ENCODE measurements at regions of chr9 and their contacts with region 1.

Region 1: DNA sequence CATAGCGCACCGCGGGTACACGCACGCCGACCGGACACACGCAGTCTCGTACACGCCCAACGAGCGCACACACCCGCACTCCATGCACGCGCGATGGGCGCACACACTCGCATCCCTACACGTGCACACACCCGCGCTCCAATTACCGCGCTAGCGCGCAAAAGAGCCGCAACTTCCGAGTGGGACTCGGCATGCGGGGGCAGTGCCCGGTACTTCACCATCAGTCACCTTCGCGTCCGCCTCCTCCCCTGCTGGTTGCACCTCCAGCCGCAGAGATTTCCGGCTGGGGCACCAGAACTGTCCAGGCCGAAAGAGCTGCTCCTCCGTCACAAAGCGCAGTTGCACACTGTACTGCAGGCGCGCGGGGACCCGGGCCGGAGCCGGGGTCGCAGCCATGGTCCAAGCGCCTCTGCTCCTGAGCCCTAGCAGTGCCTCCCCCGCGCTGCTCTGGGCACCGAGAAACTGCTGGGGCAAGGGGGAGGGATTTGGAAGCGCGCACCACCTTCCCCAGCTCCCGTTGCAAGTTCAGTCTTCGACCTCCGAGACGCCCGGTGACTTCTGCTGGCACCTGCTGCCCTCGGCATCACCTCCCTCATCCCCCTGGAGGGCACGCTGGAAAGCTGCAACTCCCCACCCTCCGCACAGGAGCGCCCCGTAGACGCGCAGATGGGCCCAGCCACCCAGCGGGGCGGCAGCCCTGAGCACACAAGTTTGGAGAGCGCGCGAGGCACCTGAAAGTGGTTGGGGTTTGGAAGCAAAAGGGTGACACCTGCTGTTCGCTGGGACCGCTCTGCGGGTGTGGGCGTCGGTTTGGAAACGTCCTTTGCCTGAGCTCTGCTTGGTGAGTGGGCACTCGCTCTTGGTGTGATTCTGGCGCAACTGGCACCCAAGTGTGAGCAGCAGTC is 337.4 kb upstream of the PUM3 start:
- DNase-seq: peak; percentile 39
- H3K4me3 ChIP-seq: peak overlapping the region in 1 of 2 experiments; percentile 19; a peak in 2 of 4 replicates
- H3K27ac ChIP-seq: no peak overlapping the region
- H3K4me1 ChIP-seq: no peaks in the 10 kb centered on the region
- H3K27me3 ChIP-seq: peaks cover 27% of the 10 kb centered on the region; the same call in 1 of the 2 replicates
- CTCF ChIP-seq: 0 out of 2 replicates have a peak, but pooled peaks have one; percentile 27
- EP300 ChIP-seq: no peak
- RAD21 ChIP-seq: peak; percentile 44

Region 2: GRCh38 chr9:3191715-3192114 is 10.4 kb after region 1 on chr9:
- CTCF ChIA-PET with region 1: interaction called, 10 read pairs
- POLR2A ChIA-PET with region 1: no interaction called
- DNase-seq: no peak
- H3K4me3 ChIP-seq: no peak overlapping the region
- H3K27ac ChIP-seq: no peak overlapping the region
- H3K4me1 ChIP-seq: no peaks in the 10 kb centered on the region
- H3K27me3 ChIP-seq: peaks cover 6% of the 10 kb centered on the region; the same call in 1 of the 2 replicates
- CTCF ChIP-seq: no peak
- EP300 ChIP-seq: no peak
- RAD21 ChIP-seq: no peak

Measured in SK-N-SH (cell line).